ENCODE measurements at regions of chr2 and their contacts with region 1.

Region 1: GRCh38 chr2:60867848-60868247 is 13.5 kb upstream of the REL start:
- DNase-seq: no peak
- H3K4me3 ChIP-seq: no peak overlapping the region
- H3K27ac ChIP-seq: no peak overlapping the region
- H3K4me1 ChIP-seq: no peaks in the 10 kb centered on the region
- H3K27me3 ChIP-seq: no peaks in the 10 kb centered on the region
- CTCF ChIP-seq: no peak
- POLR2A ChIP-seq: no peak

Region 2: DNA sequence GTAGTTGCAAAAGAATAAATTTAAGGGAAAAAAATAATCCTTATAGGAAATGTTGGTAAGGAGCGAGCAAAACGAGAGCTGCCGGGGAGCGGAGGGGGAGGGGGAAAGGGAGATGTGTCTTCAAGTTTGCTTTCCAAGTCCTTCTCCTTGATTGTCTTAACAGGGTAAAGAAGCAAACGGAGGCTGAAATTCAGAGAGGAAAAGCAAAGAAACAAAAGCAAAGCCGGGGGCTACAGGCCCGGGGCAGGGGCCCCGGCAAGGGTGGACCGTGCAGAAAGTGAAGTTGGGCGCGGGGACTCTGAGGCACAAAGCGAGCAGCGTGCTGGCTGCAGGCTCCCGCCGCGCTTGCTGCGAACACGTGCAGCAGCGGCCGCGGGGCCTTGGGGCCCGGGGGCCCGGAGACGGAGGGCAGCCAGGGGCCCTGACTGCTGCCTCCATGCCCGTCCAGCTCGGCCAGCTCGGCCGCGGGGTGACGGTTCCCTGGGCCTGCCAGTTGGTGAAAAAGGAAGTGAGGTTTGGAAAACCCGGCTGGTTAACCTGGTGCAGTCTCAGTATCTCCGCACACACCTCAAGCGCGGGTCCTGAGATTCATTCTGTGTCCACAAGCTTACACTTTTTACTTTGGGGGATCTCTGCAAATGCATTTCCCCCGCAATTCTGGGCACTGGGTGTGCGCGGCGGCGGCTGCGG is 318.5 kb before region 1 on chr2:
- intact Hi-C with region 1: loop called (anchors 5 kb)
- DNase-seq: no peak
- H3K4me3 ChIP-seq: peak overlapping the region; percentile 56 to 78 (median 73)
- H3K27ac ChIP-seq: peak overlapping the region; percentile 48 to 76
- H3K4me1 ChIP-seq: no peaks in the 10 kb centered on the region
- H3K27me3 ChIP-seq: no peaks in the 10 kb centered on the region
- CTCF ChIP-seq: no peak
- POLR2A ChIP-seq: no peak

Region 3: GRCh38 chr2:60794277-60794863 is 73.5 kb before region 1 on chr2:
- intact Hi-C with region 1: no loop called
- DNase-seq: no peak
- H3K4me3 ChIP-seq: no peak overlapping the region
- H3K27ac ChIP-seq: no peak overlapping the region
- H3K4me1 ChIP-seq: no peaks in the 10 kb centered on the region
- H3K27me3 ChIP-seq: no peaks in the 10 kb centered on the region
- CTCF ChIP-seq: peak in 2 of 3 donors; percentile 33 to 50
- POLR2A ChIP-seq: no peak